CD8-positive, alpha-beta T cell (primary cell): ENCODE measurements at regions of chr17 and their contacts with region 1.

Region 1: GRCh38 chr17:1516388-1517161 is at the start of gene INPP5K:
- DNase-seq: peak; percentile 95 to 100 (median 98)
- ATAC-seq: peak; percentile 91
- H3K4me3 ChIP-seq: peak within 1 kb of the TSS; percentile 93 to 99
- H3K4me3 Mint-ChIP-seq: peak within 1 kb of the TSS; percentile 90
- H3K27ac ChIP-seq: peak within 1 kb of the TSS; percentile 86 to 93
- H3K27ac Mint-ChIP-seq: peak within 1 kb of the TSS; percentile 91
- H3K4me1 ChIP-seq: peaks cover 20% of the 10 kb centered on the region
- H3K4me1 Mint-ChIP-seq: peaks cover 24% of the 10 kb centered on the region
- H3K27me3 ChIP-seq: no peaks in the 10 kb centered on the region
- H3K27me3 Mint-ChIP-seq: no peaks in the 10 kb centered on the region
- CTCF ChIP-seq: no peak
- total RNA-seq, gene INPP5K: 204 to 221 TPM

Region 2: DNA sequence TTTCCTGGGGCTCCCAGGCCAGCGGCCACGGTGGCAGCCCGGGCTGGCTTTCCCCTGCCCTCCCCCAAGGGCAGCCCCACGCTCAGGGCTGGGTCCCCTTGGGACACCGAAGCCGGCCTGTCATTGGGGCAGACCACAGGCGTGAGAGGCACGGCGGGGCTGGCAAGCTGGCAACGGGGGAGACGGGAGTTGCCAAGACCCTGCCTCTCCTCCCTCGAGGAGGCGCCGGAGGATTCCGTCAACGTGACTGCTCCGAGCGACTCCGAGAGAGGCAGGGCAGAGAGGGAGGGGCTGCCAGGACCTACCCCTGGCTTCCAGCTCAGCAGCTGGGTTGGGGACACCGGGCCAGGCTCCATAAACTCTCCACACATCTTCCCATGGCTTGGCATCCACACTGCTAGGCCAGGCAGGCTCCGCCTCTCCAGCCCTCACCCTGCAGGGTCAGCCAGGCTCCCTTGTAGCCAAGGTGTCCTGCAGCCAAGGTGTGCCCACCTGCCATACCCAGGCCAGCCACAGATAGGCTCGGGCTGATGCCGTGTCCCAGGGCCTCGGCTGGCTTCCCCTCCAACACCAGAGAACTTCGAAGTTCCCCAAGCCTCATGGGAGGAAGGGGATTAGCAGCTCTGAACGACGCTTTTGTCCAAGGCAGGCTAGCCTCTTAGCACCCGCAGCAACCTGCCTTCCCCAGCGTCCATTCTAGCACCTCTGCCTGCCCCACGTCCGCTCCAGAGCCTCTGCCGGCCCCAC is 494.1 kb before region 1 on chr17:
- CTCF ChIA-PET with region 1: no interaction called
- POLR2A ChIA-PET with region 1: no interaction called
- intact Hi-C with region 1: no loop called
- DNase-seq: no peak
- ATAC-seq: no peak
- H3K4me3 ChIP-seq: no peak overlapping the region
- H3K4me3 Mint-ChIP-seq: no peak overlapping the region
- H3K27ac ChIP-seq: no peak overlapping the region
- H3K27ac Mint-ChIP-seq: no peak overlapping the region
- H3K4me1 ChIP-seq: no peaks in the 10 kb centered on the region
- H3K4me1 Mint-ChIP-seq: no peaks in the 10 kb centered on the region
- H3K27me3 ChIP-seq: no peaks in the 10 kb centered on the region
- H3K27me3 Mint-ChIP-seq: no peaks in the 10 kb centered on the region
- CTCF ChIP-seq: no peak

Region 3: GRCh38 chr17:1275962-1276736 is 240.4 kb before region 1 on chr17:
- CTCF ChIA-PET with region 1: no interaction called
- POLR2A ChIA-PET with region 1: no interaction called
- intact Hi-C with region 1: loop called (anchors 5 kb)
- DNase-seq: peak; percentile 49 to 84 (median 79)
- ATAC-seq: peak; percentile 90
- H3K4me3 ChIP-seq: no peak overlapping the region
- H3K4me3 Mint-ChIP-seq: no peak overlapping the region
- H3K27ac ChIP-seq: no peak overlapping the region
- H3K27ac Mint-ChIP-seq: no peak overlapping the region
- H3K4me1 ChIP-seq: no peaks in the 10 kb centered on the region
- H3K4me1 Mint-ChIP-seq: peaks cover 8% of the 10 kb centered on the region
- H3K27me3 ChIP-seq: no peaks in the 10 kb centered on the region
- H3K27me3 Mint-ChIP-seq: peaks cover 32% of the 10 kb centered on the region
- CTCF ChIP-seq: peak; percentile 88

Region 4: GRCh38 chr17:1455797-1456599 is 60.6 kb before region 1 on chr17 and contains the start of gene CRK:
- CTCF ChIA-PET with region 1: no interaction called
- POLR2A ChIA-PET with region 1: interaction called, 9 read pairs
- intact Hi-C with region 1: loop called (anchors 1 kb)
- DNase-seq: peak; percentile 95 to 100 (median 99)
- ATAC-seq: peak; percentile 95
- H3K4me3 ChIP-seq: peak within 1 kb of the TSS; percentile 80 to 94
- H3K4me3 Mint-ChIP-seq: peak within 1 kb of the TSS; percentile 92
- H3K27ac ChIP-seq: peak within 1 kb of the TSS; percentile 92 to 93
- H3K27ac Mint-ChIP-seq: peak within 1 kb of the TSS; percentile 91
- H3K4me1 ChIP-seq: peaks cover 43% of the 10 kb centered on the region
- H3K4me1 Mint-ChIP-seq: peaks cover 46% of the 10 kb centered on the region
- H3K27me3 ChIP-seq: peaks cover 0 to 10% of the 10 kb centered on the region in 2 experiments
- H3K27me3 Mint-ChIP-seq: peaks cover 10% of the 10 kb centered on the region
- CTCF ChIP-seq: no peak
- total RNA-seq, gene CRK: 15.4 to 15.9 TPM

Region 5: GRCh38 chr17:1561400-1562175 is 45.0 kb after region 1 on chr17:
- CTCF ChIA-PET with region 1: no interaction called
- POLR2A ChIA-PET with region 1: no interaction called
- intact Hi-C with region 1: loop called (anchors 1 kb)
- DNase-seq: peak in 8 of 9 experiments; percentile 16 to 62 (median 34)
- ATAC-seq: peak; percentile 35
- H3K4me3 ChIP-seq: peak overlapping the region; percentile 40 to 41
- H3K4me3 Mint-ChIP-seq: peak overlapping the region; percentile 83
- H3K27ac ChIP-seq: peak overlapping the region in 1 of 2 experiments; percentile 40
- H3K27ac Mint-ChIP-seq: peak overlapping the region; percentile 66
- H3K4me1 ChIP-seq: peaks cover 19% of the 10 kb centered on the region
- H3K4me1 Mint-ChIP-seq: peaks cover 45% of the 10 kb centered on the region
- H3K27me3 ChIP-seq: no peaks in the 10 kb centered on the region
- H3K27me3 Mint-ChIP-seq: no peaks in the 10 kb centered on the region
- CTCF ChIP-seq: peak; percentile 38

Region 6: GRCh38 chr17:1716076-1716995 is 199.8 kb after region 1 on chr17:
- CTCF ChIA-PET with region 1: no interaction called
- POLR2A ChIA-PET with region 1: no interaction called
- intact Hi-C with region 1: loop called in 1 of 2 experiments (anchors 1 kb)
- DNase-seq: peak; percentile 100
- ATAC-seq: peak; percentile 90
- H3K4me3 ChIP-seq: peak overlapping the region; percentile 72 to 78
- H3K4me3 Mint-ChIP-seq: peak overlapping the region; percentile 94
- H3K27ac ChIP-seq: peak overlapping the region; percentile 65 to 88
- H3K27ac Mint-ChIP-seq: peak overlapping the region; percentile 90
- H3K4me1 ChIP-seq: peaks cover 26% of the 10 kb centered on the region
- H3K4me1 Mint-ChIP-seq: peaks cover 26% of the 10 kb centered on the region
- H3K27me3 ChIP-seq: peaks cover 3 to 4% of the 10 kb centered on the region in 2 experiments
- H3K27me3 Mint-ChIP-seq: peaks cover 2% of the 10 kb centered on the region
- CTCF ChIP-seq: no peak